ENCODE measurements at regions of chr20 and their contacts with region 1.

Region 1: DNA sequence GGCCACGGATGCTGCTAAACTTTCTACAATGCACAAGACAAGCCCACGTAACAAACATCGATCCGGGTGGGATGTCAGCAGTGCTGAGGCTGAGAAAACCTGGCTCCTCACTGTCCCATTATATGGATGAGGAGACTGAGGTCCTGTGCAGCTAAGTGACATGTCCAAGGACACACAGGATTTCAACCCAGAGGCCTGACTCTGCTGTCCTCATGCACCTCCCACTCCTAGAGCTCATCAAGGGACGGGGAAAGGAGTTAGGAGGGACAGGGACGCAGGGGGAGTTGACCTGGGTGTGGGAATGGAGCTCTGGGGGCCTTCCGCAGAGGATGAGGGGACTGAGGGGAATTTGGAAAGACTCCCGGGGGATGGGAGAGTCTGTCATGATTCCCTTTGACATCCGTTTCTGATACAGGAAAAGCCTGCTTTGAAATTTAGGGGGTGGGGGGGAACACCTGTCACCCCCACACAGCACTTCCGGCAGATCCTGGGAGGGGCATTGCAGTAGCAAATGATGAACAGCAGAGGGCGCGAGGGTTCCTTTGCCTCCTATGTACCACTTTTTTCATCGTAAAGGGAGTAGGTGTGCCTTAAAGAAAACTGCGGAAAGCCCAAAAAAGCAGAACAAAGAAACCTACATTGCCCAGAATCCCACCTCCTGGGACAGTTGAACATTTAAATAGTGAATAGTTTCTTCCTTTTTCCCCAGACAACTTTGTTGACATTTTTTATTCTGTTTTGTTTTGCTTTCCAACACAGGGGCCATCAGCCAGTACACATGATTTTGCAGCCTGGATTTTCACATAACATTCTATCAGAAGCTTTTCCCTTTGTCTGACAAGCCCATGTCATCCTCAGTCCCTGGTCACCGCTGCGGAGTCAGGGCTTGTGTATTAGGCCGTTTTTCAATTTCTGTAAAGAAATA is 48.6 kb downstream of the SLC2A10 start:
- DNase-seq: no peak
- H3K4me3 ChIP-seq: no peak overlapping the region
- H3K27ac ChIP-seq: no peak overlapping the region
- H3K4me1 ChIP-seq: peaks cover 0 to 4% (median 0%) of the 10 kb centered on the region in 4 donors
- H3K27me3 ChIP-seq: no peaks in the 10 kb centered on the region
- CTCF ChIP-seq: peak; percentile 38 to 95 (median 88)
- EP300 ChIP-seq: no peak
- POLR2A ChIP-seq: no peak

Region 2: DNA sequence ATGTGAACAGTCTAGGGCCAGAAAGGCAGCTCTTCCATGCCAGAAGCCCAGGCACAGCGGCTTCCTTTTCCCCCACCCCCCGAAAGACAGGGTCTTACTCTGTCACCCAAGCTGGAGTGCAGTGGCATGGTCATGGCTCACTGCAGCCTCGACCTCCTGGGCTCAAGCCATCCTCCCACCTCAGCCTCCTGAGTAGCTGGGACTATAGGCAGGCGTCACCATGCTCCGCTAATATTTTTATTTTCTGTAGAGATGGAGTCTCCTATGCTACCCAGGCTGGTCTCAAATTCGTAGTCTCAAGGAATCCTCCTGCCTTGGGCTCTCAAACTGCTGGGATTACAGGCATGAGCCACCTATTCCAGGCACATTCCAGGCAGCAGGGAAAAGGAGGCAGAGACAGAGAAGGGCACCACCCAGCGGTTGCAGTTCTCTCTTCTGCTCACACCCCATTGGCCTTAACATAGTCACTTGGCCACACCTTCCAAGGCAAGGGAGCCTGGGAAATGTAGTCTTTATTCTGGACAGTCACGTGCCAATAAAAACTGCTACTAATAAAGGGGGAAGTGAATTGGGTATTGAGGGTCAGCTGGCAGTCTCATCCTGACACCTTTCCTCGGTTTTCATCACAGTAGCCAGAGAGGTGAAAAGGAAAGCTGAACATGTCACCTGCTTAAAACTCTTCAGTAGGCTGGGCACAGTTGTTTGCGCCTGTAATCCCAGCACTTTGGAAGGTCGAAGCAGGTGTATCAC is 392.6 kb after region 1 on chr20:
- intact Hi-C with region 1: loop called (anchors 2 kb)
- DNase-seq: peak; percentile 59
- H3K4me3 ChIP-seq: no peak overlapping the region
- H3K27ac ChIP-seq: no peak overlapping the region
- H3K4me1 ChIP-seq: no peaks in the 10 kb centered on the region
- H3K27me3 ChIP-seq: no peaks in the 10 kb centered on the region
- CTCF ChIP-seq: peak; percentile 47 to 57 (median 50)
- EP300 ChIP-seq: no peak
- POLR2A ChIP-seq: no peak

Region 3: GRCh38 chr20:47389867-47390347 is 631.9 kb after region 1 on chr20:
- intact Hi-C with region 1: loop called (anchors 10 kb)
- DNase-seq: no peak
- H3K4me3 ChIP-seq: no peak overlapping the region
- H3K27ac ChIP-seq: no peak overlapping the region
- H3K4me1 ChIP-seq: peaks cover 0 to under 1% (median under 1%) of the 10 kb centered on the region in 4 donors
- H3K27me3 ChIP-seq: no peaks in the 10 kb centered on the region
- CTCF ChIP-seq: no peak
- EP300 ChIP-seq: no peak
- POLR2A ChIP-seq: no peak